Lower leg skin (tissue), 4 donors: ENCODE measurements at regions of chr6 and their contacts with region 1.

Region 1: GRCh38 chr6:73519926-73520687 is 725 bp downstream of the EEF1A1 start:
- DNase-seq: peak; percentile 69 to 95
- H3K4me3 ChIP-seq: peak overlapping the region; percentile 94
- CTCF ChIP-seq: no peak
- POLR2A ChIP-seq: no peak

Region 2: DNA sequence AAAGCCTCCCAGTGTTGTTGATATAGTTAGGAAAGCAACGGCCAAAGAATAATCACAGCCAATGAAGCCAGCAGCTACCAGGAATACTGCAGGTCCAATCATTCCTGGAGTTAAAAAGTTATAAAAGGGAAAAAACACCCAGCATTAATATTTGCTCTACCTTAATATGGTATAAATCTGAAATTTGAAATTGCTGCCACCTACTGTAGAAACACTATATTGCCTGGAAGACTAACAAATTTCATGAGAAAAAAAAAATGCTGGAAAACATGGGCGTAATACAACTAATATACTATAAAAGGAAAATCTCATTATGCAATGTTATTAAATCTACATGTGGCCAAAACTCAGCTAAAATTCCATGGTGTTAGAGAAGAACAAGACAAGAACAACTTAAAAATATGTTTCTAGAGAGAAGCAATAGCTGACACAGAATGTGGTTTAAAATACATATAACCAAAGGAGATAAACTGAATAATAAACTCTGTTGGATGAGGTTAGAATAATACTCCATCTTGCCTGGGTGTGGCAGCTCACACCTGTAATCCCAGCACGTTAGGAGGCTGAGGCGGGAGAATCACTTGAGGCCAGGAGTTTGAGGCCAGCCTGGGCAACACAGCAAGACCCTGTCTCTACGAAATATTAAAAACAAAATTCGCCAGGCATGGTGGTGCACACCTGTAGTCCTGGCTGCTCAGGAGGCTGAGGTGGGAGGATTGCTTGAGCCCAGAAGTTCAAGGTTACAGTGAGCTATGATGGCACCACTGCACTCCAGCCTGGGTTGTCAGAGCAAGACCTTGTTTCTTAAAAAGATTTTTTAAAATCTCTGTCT is 90.6 kb after region 1 on chr6:
- intact Hi-C with region 1: loop called (anchors 10 kb)
- DNase-seq: peak in 1 of 2 donors; percentile 66
- H3K4me3 ChIP-seq: no peak overlapping the region
- CTCF ChIP-seq: no peak
- POLR2A ChIP-seq: no peak